Esophagus squamous epithelium (tissue), 5 donors: ENCODE measurements at regions of chr16 and their contacts with region 1.

Region 1: DNA sequence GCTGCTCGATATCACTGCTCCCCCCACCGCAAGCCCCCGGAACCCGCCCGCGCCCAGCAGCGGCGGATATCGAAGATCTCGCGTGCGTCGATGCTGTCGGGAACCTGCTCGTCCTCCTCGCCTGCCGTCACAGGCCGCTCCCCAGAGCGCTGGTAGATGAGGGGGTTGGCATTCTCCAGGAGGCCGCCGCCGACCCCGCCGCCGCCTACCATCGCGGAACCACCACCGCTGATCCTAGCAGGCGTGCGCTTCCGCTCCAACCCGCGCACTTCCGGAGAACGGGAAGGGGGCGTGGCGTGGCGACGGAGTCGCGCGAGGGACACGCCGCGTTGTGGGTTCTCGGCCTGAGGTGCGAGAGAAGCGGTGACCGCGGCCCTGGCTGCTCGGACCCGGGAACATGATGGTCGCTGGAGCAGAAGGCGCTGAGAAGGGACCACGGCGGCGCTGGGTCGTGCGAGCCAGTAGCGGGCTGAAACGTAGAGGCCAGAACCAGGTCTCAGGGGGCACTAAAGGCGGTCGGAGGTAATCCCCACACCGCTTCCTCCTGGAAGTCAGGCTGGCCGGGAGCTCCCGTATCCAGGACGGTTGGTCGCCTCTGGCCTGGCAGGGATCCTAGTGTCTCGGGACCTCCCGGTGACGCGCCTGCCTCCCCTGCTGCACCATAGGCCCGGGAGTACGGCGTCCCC is at the start of gene CIAO2B:
- DNase-seq: no peak
- H3K4me3 ChIP-seq: peak within 1 kb of the TSS; percentile 78 to 100 (median 92)
- H3K27ac ChIP-seq: peak within 1 kb of the TSS; percentile 97 to 100 (median 98)
- H3K4me1 ChIP-seq: peaks cover 32 to 85% (median 36%) of the 10 kb centered on the region in 3 donors
- H3K27me3 ChIP-seq: no peaks in the 10 kb centered on the region
- CTCF ChIP-seq: peak in 1 of 6 experiments; percentile 26
- POLR2A ChIP-seq: peak in 3 of 4 donors; percentile 79 to 94 (median 83)
- total RNA-seq, gene CIAO2B: 112 to 153 (median 126) TPM

Region 2: DNA sequence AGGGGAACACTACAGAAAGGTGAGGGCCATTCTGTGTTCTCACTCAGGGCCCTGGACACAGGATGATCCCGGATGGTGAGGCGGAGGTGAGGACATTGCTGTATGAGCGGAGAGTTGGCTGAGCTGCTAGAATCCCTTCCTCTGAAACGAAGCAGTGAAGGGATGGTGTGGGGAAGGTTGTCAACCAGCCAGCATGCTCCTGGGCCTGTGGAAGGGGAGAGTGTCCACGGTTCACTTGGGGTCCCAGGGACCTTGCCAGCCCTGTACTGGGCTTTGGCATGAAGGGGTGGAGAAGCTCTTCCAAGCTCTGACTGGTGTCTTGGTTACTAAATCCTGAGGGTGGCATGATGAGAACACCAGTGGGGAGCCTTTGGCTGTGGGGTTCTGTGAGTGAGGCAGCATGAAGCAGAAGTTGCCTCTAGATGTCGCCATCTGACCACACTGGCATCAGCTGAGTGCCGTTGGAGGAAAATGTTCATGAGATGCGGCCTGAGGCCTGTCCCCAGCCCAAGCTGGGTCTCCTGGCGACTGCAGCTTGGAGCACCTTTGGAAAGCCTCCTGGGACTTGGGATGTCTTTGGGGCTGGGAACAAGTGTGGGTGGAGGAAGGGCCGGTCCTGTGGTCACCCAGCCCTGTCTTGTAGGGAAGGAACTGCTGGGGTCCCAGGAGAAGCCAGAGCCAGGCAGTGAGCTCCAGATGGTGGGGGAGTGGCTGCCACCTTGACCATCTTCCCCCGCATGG is 39.2 kb before region 1 on chr16:
- intact Hi-C with region 1: loop called (anchors 5 kb)
- DNase-seq: peak; percentile 6
- H3K4me3 ChIP-seq: no peak overlapping the region
- H3K27ac ChIP-seq: peak overlapping the region; percentile 80 to 93 (median 85)
- H3K4me1 ChIP-seq: peaks cover 30 to 52% (median 40%) of the 10 kb centered on the region in 3 donors
- H3K27me3 ChIP-seq: no peaks in the 10 kb centered on the region
- CTCF ChIP-seq: peak; percentile 42 to 93 (median 78)
- POLR2A ChIP-seq: no peak